H1 (cell line): ENCODE measurements at regions of chr2 and their contacts with region 1.

Region 1: DNA sequence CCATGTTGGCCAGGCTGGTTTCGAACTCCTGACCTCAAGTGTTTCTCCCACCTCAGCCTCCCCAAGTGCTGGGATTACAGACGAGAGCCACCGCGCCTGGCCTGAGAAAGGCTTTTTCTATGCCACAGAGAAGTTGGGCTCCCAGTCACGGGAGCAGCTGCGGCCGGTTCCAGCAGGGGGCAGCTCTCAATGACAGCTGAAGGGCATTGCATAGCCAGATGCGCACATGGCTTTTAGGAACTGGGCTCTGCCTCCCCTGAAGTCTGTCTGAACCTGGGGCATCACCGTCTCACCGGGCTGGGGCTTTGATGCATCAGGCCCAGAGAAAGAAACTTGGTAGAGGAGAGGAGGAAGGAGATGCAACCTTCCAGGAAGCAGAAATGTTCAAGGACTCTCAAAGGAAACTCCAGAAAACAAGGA is 84.2 kb upstream of the LAPTM4A start:
- DNase-seq: peak; percentile 63 to 83
- H3K4me3 ChIP-seq: no peak overlapping the region
- H3K27ac ChIP-seq: no peak overlapping the region
- H3K4me1 ChIP-seq: peaks cover 0 to 9% (median 6%) of the 10 kb centered on the region in 4 experiments; a peak in 6 of 7 replicates
- H3K27me3 ChIP-seq: peaks cover 0 to 7% (median 0%) of the 10 kb centered on the region in 4 experiments; a peak in 2 of 7 replicates
- CTCF ChIP-seq: peak; percentile 83 to 89 (median 84)
- EP300 ChIP-seq: 0 out of 3 replicates have a peak, but pooled peaks of 1 of the 2 experiments have one; percentile 49
- POLR2A ChIP-seq: no peak
- RAD21 ChIP-seq: peak; percentile 66 to 78

Region 2: DNA sequence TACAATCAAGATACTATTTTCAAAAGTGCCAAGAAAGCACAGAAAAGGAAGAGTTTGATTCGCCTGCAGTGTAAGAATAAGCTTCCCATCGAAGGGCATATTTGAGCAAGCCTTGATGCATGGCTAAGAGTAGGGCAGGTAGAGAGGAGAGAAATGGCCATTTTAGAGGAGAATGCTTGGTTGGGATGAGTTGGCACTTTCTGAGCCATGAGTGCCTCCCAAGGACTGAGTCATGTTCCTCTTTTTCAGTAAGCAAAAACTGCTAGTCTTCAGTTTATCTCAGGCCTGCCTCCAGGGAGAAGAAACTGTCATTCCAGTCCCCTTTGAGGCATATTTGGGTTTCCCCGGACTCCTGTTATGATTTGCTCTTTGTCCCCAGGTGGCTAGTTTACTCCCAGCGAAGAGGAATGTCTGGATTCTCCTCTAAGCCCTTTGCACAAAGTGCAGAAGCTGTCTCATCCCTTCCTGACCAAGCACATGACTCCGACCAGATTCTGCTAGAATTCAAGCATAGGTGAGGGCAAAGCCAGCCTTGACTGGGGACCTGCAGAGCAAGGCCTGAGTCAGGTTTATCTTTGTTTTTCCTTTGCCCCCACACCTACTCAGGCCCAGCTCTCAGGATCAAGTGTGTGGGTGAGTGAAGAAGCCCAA is 349.1 kb before region 1 on chr2:
- CTCF ChIA-PET with region 1: no interaction called
- POLR2A ChIA-PET with region 1: no interaction called
- DNase-seq: no peak
- H3K4me3 ChIP-seq: no peak overlapping the region
- H3K27ac ChIP-seq: no peak overlapping the region
- H3K4me1 ChIP-seq: peaks cover 5 to 15% (median 9%) of the 10 kb centered on the region in 4 experiments; a peak in 6 of 7 replicates
- H3K27me3 ChIP-seq: no peaks in the 10 kb centered on the region; a peak in 1 of 7 replicates
- CTCF ChIP-seq: no peak
- EP300 ChIP-seq: no peak
- POLR2A ChIP-seq: no peak
- RAD21 ChIP-seq: no peak

Region 3: GRCh38 chr2:20106746-20107145 is 28.9 kb before region 1 on chr2:
- CTCF ChIA-PET with region 1: interaction called, 19 read pairs
- POLR2A ChIA-PET with region 1: no interaction called
- DNase-seq: peak; percentile 21 to 94
- H3K4me3 ChIP-seq: peak overlapping the region in 3 of 4 experiments; percentile 27 to 48 (median 29); a peak in 5 of 8 replicates
- H3K27ac ChIP-seq: no peak overlapping the region
- H3K4me1 ChIP-seq: peaks cover 0 to 2% (median 0%) of the 10 kb centered on the region in 4 experiments; a peak in 1 of 7 replicates
- H3K27me3 ChIP-seq: peaks cover 0 to 5% (median 3%) of the 10 kb centered on the region in 4 experiments; a peak in 3 of 7 replicates
- CTCF ChIP-seq: peak; percentile 72 to 83 (median 73)
- EP300 ChIP-seq: no peak
- POLR2A ChIP-seq: no peak
- RAD21 ChIP-seq: peak; percentile 65 to 77

Region 4: GRCh38 chr2:20148923-20149668 is 13.5 kb after region 1 on chr2:
- CTCF ChIA-PET with region 1: interaction called, 12 read pairs
- POLR2A ChIA-PET with region 1: interaction called, 3 read pairs
- DNase-seq: no peak
- H3K4me3 ChIP-seq: no peak overlapping the region; a peak in 1 of 8 replicates
- H3K27ac ChIP-seq: no peak overlapping the region
- H3K4me1 ChIP-seq: peaks cover 0 to 19% (median 9%) of the 10 kb centered on the region in 4 experiments; a peak in 6 of 7 replicates
- H3K27me3 ChIP-seq: no peaks in the 10 kb centered on the region
- CTCF ChIP-seq: no peak
- EP300 ChIP-seq: no peak
- POLR2A ChIP-seq: no peak
- RAD21 ChIP-seq: no peak

Region 5: DNA sequence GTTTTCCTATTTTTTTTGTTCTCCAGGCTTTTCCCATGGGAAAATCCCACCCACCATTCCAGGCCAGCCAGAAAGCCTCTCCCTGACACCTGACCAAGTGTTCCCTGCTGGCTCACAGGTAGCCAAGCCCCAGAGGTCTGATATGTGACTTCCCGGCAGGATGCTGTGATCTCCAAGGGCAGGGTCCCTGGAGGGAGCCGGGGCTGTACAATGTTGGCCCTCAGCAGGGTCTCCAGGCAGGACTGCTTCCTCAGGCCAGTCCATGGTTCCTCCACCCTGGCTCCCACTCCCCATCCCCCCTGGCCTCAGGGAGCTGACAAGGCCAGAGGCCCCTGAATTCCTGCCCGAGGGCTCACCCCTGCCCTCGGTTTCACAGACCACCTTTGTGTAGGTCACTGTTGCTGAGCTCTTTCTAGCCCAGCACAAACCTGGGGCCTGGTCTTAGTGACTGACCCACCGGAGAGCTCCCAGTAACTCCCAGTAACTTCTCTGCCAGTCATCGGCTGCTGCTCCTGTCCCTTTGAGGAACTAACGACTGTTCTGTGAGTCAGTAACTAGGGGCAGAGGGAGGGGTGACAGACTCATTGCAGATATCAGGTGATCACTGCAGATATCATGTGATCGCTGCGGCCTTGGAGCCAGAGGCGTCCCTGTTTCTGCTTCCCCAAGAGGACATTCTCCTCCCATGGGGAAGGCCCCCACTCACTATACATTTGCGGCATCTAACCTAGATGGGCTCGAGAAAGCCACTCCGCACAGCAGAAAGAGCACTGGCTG is 50.6 kb after region 1 on chr2:
- CTCF ChIA-PET with region 1: interaction called, 39 read pairs
- POLR2A ChIA-PET with region 1: no interaction called
- DNase-seq: no peak
- H3K4me3 ChIP-seq: no peak overlapping the region
- H3K27ac ChIP-seq: no peak overlapping the region
- H3K4me1 ChIP-seq: peaks cover 0 to 39% (median 21%) of the 10 kb centered on the region in 4 experiments; a peak in 6 of 7 replicates
- H3K27me3 ChIP-seq: no peaks in the 10 kb centered on the region; a peak in 3 of 7 replicates
- CTCF ChIP-seq: no peak
- EP300 ChIP-seq: no peak
- POLR2A ChIP-seq: no peak
- RAD21 ChIP-seq: no peak

Region 6: DNA sequence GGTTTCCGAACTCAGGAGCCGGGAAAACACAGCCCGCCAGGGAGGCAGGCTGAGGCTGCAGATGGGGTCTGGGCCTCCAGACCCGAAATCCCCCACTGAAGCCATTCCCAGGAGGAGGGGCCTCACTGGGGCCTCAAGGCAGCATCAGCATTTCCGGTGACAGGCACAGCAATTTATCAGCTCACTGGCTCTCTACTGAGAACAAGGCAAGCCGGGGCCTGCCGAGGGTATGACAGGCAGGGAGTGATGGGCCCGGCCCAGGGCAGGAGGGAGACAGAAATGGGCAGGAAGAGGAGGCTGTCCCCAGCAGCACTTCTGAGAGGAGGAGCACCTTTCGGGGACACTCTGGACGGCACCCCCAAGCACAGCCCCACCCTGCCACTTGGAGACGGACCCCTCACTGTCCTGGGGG is 76.8 kb after region 1 on chr2:
- CTCF ChIA-PET with region 1: interaction called, 32 read pairs
- POLR2A ChIA-PET with region 1: interaction called, 3 read pairs
- DNase-seq: no peak
- H3K4me3 ChIP-seq: no peak overlapping the region
- H3K27ac ChIP-seq: no peak overlapping the region
- H3K4me1 ChIP-seq: peaks cover 0 to 26% (median 9%) of the 10 kb centered on the region in 4 experiments; a peak in 6 of 7 replicates
- H3K27me3 ChIP-seq: no peaks in the 10 kb centered on the region
- CTCF ChIP-seq: no peak
- EP300 ChIP-seq: no peak
- POLR2A ChIP-seq: no peak
- RAD21 ChIP-seq: no peak